ENCODE measurements at regions of chr15 and their contacts with region 1.

Region 1: DNA sequence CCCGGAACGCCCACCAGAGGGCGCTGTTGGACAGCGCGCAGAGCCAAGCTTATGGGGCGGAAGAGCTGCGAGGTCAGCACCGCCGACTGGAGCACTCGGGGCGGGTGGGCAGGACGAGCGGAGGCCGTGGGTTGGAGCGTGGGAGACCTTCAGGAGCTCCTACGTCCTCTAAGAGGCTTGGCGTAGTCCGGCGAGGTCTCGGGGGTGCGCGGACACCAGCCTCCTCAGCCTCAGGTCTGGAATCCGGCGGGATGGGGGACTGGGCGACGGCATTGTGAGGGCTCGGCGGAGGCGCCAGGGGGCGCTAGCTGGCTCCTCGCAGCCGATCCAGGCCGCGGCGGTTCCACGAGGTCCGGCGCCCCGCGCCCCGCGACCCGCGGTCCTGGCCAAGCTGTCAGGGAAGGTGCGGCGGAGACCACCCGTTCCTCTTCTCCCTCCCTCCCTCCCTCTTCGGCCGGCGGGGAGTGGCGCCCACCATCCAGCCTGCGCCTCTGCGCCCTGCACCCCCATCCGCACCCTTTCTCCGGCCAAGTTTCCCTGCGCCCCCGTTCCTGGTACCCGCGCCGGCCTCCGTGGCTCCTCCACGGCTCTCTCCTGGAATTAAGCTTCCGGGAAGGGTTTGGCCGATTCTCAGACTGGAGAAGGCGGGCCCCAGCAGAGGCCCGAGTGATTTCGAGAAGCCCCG is 24.3 kb upstream of the POLG start:
- DNase-seq: peak; percentile 91

Region 2: DNA sequence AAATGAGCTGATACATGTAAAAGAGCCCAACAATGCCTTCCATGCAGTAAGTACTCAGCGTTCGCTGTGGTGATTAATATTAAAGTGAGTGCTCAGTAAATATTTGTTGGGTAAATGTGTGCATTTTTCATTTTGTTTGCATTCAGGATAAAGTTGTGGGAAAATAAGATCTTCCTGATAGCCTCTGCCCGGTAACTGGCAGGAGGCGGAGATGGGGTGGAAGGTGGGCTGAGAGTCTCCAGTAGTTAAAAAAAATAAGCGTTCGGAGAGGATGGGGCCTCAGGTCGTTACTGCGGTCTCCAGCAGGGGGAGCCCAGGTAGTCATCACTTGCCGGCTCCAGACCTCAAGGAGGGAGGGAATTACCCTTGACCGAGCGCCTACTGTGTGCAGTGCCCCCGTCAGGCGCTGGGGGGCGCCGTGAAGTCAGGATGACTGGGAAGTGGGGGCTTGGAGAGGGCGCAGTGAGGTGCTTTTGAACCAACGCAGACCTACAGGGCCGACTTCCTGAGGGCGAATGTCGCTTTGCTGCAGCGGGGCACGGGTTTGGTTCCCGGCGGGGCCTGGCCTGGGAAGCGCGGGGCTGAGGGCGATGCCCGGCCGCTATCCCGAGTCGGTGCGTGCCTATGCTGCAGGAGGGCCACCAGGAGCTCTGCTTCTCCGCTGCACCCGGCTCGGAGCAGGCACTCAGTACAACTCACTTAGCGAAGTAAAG is 57.4 kb after region 1 on chr15:
- intact Hi-C with region 1: loop called (anchors 5 kb)
- DNase-seq: no peak

Region 3: DNA sequence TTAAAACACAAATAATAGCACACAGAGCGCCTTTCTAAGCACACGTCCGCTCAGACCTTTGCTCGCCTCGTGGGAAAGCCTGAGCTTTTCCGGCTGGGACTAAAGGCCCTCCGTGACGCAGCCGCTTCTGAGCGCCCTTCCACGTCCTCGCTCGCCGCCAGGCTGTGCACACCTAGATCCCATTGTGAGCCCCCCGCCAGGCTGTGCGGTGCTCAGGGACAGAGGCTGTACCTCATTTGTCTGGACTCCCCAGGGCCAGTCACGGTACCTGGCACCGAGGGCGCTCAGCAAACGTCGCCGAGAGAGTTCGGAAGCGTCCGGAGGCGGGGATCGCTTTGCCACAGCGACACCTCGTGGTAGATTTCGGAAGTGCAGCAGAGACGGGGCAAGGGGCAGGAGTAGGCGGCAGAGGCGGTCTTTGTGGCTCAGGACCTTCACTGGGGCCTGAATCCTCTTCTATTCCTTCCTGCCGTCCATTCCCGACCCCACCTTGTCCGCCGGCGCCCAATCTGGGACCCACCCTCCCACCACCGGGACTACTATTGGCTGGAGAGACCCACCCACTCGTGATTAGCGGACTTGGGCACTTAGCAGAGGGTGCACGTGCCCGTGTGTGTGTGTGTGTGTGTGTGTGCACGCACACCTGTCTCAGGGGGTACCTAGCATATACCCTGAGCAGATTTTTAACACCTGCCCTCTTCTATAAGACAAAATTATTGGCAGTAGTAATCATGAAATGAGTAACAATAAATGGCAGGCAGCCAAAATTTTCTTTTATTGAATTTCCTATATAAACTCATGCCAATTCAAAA is 71.8 kb after region 1 on chr15:
- intact Hi-C with region 1: loop called (anchors 1 kb)
- DNase-seq: peak; percentile 94

Region 4: DNA sequence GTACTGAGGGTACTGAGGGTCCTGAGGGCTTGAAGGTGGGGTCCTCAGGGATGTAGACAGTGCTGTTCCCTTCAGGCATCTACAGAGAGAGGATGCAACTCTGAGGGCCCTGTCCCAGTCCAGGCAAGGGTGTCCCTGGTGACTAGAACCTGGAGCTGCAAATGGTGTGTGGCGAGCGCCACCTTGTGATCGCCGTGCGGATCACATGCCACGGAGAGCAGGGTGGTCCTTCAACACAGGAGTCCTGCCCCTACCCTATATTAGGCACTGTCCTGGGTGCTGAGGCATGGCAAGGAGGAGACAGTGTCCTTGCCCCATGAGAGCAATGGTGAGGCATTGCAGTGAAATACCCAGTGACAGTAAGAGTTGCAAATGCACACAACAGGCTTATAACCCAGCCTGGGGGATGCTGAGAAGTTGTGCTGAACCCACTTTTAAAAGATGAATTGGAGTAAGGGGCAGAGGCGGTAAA is 113.9 kb after region 1 on chr15:
- intact Hi-C with region 1: loop called (anchors 2 kb)
- DNase-seq: no peak

Measured in cardiac septum (tissue), 1 donor.